Spleen (tissue), 13 donors: ENCODE measurements at regions of chr2 and their contacts with region 1.

Region 1: DNA sequence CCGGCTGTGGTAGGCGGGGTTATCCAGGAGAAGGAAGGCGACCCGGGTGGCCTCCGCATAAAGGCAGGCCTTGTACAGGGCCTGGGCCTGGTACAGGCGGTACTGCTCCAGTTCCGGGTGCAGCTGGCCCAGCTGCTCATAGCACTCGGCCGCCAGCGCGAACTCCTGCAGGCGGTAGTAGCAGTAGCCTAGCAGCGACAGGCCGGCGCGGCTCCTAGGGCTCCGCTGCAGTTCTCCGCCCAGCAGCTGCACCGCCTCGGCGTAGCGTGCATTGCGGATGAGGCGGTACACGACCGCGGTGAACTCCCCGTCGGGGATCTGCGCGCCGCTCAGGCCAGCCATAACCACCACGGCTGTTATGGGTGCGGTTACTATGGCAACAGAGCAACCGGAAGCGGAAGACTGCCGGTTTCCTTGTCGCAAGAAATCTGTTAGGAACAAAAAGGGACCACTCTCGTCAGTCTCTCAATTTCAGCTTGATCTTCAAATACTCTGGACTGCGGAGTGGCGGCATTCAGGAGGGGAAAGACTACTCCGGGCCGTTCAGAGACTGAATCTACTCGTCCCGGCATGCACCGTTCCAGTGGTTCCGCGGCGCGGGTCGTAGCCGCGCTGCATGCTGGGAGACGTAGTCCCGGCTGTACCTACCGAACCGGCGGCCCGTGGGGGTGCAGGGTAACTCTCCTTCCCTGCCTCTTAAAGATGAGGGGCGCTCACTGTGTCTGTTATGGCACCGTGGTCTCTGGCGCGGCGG is 160.0 kb downstream of the AGPS start:
- DNase-seq: peak; percentile 96
- H3K4me3 ChIP-seq: peak overlapping the region; percentile 50 to 83 (median 76)
- H3K27ac ChIP-seq: peak overlapping the region; percentile 93 to 98 (median 96)
- H3K4me1 ChIP-seq: peaks cover 0 to 18% (median 12%) of the 10 kb centered on the region in 6 donors
- H3K27me3 ChIP-seq: no peaks in the 10 kb centered on the region
- CTCF ChIP-seq: peak in 2 of 11 experiments; percentile 21 to 30
- POLR2A ChIP-seq: no peak

Region 2: GRCh38 chr2:177622521-177622920 is 69.9 kb after region 1 on chr2:
- intact Hi-C with region 1: loop called (anchors 10 kb)
- DNase-seq: no peak
- H3K4me3 ChIP-seq: no peak overlapping the region
- H3K27ac ChIP-seq: no peak overlapping the region
- H3K4me1 ChIP-seq: peaks cover 0 to 14% (median 11%) of the 10 kb centered on the region in 6 donors
- H3K27me3 ChIP-seq: peaks cover 0 to 8% (median 0%) of the 10 kb centered on the region in 7 donors
- CTCF ChIP-seq: peak in 1 of 11 experiments; percentile 13
- POLR2A ChIP-seq: no peak